CD8-positive, alpha-beta memory T cell (primary cell): ENCODE measurements at regions of chr3 and their contacts with region 1.

Region 1: DNA sequence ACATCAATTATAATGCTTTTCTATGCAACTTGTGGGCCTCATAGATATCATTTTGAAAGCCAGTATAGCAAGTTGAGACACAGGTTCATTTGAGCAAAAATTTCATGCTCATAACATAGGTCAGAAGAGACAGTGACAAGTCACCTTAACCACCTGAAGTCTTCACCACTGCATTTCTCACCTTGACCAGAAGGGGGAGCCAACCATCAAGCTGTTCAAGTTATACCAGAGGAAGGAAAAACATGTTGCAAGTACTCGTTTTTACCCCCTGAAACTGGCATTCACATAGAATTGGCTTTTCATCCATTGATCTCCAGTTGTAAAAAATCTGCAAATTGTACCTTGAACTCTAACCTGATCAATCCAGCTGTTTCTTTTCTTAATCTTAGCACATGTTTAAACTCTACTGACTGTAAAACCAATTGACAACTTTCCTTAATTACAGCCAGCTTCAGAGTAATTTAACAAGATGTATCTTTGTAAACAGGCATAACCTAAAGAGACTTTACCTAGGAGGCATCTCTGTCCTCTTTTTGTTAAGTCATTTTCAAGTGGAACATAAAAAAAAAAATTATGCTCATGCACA is 1.4 kb downstream of the LMOD3 start:
- DNase-seq: peak; percentile 68 to 85 (median 71)
- H3K4me3 ChIP-seq: no peak overlapping the region
- H3K4me3 Mint-ChIP-seq: no peak overlapping the region
- H3K27ac ChIP-seq: no peak overlapping the region
- H3K27ac Mint-ChIP-seq: no peak overlapping the region
- H3K4me1 ChIP-seq: no peaks in the 10 kb centered on the region
- H3K4me1 Mint-ChIP-seq: peaks cover 4 to 7% (median 7%) of the 10 kb centered on the region in 3 donors
- H3K27me3 ChIP-seq: no peaks in the 10 kb centered on the region
- H3K27me3 Mint-ChIP-seq: peaks cover 0 to 4% of the 10 kb centered on the region in 2 donors

Region 2: DNA sequence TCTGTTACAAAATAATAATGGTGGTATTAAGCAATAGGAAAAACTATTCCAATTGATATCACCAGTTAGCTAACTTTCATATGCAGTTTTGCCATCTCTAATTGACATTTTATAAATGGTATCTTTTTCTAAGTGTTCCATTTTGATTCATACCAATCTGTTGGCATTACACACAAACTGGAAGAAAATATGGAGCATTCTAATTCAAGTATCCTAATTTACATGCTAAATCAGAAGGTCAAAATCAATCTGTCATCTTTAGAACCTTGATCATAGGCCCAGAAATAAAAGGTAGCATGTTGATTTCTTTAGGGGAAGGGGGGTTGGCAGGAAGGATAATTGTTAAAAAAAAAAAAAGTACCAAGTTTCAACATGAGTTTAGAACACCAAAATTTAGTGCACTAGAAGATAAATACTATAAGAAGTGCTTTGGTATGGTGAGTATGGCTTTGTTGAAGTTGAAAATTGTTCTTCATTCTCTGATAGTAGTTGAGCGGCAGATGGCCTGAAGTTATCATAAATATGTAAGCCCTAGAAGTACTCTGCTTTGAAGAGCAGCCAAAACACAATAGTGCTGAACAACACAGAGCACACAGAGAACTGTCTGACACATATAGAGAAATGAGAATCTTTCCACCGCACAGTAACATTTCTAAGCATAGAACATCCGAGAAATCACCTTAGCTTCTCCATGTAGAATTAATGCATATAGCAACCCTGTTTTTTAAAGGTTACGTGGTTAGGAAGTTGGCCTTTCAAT is 318.7 kb before region 1 on chr3:
- CTCF ChIA-PET with region 1: no interaction called
- POLR2A ChIA-PET with region 1: no interaction called
- DNase-seq: no peak
- H3K4me3 ChIP-seq: no peak overlapping the region
- H3K4me3 Mint-ChIP-seq: no peak overlapping the region
- H3K27ac ChIP-seq: no peak overlapping the region
- H3K27ac Mint-ChIP-seq: no peak overlapping the region
- H3K4me1 ChIP-seq: no peaks in the 10 kb centered on the region
- H3K4me1 Mint-ChIP-seq: no peaks in the 10 kb centered on the region
- H3K27me3 ChIP-seq: no peaks in the 10 kb centered on the region
- H3K27me3 Mint-ChIP-seq: peaks cover 0 to 2% of the 10 kb centered on the region in 2 donors

Region 3: GRCh38 chr3:69099576-69099975 is 21.4 kb before region 1 on chr3:
- CTCF ChIA-PET with region 1: interaction called, 14 read pairs
- POLR2A ChIA-PET with region 1: interaction called, 5 read pairs
- DNase-seq: no peak
- H3K4me3 ChIP-seq: no peak overlapping the region
- H3K4me3 Mint-ChIP-seq: peak overlapping the region in 2 of 7 donors; percentile 26 to 44
- H3K27ac ChIP-seq: no peak overlapping the region
- H3K27ac Mint-ChIP-seq: peak overlapping the region in 6 of 8 donors; percentile 16 to 73 (median 58)
- H3K4me1 ChIP-seq: peaks cover 66% of the 10 kb centered on the region
- H3K4me1 Mint-ChIP-seq: peaks cover 57 to 92% (median 87%) of the 10 kb centered on the region in 3 donors
- H3K27me3 ChIP-seq: no peaks in the 10 kb centered on the region
- H3K27me3 Mint-ChIP-seq: no peaks in the 10 kb centered on the region

Region 4: GRCh38 chr3:69104996-69105719 is 15.8 kb before region 1 on chr3:
- CTCF ChIA-PET with region 1: interaction called, 15 read pairs
- POLR2A ChIA-PET with region 1: no interaction called
- DNase-seq: no peak
- H3K4me3 ChIP-seq: no peak overlapping the region
- H3K4me3 Mint-ChIP-seq: no peak overlapping the region
- H3K27ac ChIP-seq: no peak overlapping the region
- H3K27ac Mint-ChIP-seq: peak overlapping the region in 2 of 8 donors; percentile 5 to 46
- H3K4me1 ChIP-seq: peaks cover 23% of the 10 kb centered on the region
- H3K4me1 Mint-ChIP-seq: peaks cover 21 to 68% (median 45%) of the 10 kb centered on the region in 3 donors
- H3K27me3 ChIP-seq: no peaks in the 10 kb centered on the region
- H3K27me3 Mint-ChIP-seq: no peaks in the 10 kb centered on the region